ENCODE measurements at regions of chr19 and their contacts with region 1.

Region 1: DNA sequence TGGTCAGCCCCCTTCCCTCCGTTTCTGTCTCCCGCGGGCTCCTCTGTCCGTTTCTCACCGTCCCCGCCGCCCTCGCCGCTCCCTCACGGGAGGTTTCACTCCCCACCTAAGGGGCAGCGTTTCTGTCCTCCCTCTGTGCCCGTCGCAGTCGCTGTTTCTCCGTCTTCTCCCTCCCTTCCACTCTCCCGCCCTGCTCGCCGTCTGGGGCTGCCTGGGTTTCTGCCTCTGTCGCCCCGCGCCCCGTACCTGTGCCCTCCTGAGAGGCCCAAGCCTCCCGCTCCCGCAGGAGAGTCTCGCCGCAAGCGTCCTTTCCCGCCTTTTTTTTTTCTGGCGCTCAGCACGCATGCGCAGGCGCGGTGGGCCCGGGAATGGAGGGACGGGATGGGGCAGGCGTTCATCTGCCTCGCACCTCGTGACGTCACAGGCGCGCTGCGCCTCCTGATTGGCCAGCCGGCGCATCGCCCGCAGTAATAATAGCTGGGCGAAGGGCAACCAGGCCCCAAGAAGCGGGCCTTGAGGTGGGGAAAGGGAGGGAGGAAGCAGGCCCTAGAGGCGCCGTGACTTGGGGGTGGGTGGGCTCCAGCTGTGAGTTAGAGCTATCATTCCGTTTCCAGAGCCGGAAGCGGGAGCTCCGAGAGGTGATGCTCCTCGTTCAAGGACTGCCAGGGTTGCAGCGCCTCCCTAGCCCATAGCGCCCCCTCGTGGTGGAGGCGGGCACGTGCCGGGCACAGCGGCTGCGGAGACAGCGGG is 15.4 kb downstream of the SSC5D start:
- DNase-seq: peak; percentile 62 to 96
- H3K4me3 ChIP-seq: peak overlapping the region; percentile 27; the same call in 1 of the 2 replicates
- H3K27ac ChIP-seq: no peak overlapping the region
- H3K4me1 ChIP-seq: no peaks in the 10 kb centered on the region
- H3K27me3 ChIP-seq: peaks cover 27% of the 10 kb centered on the region
- CTCF ChIP-seq: peak; percentile 99

Region 2: DNA sequence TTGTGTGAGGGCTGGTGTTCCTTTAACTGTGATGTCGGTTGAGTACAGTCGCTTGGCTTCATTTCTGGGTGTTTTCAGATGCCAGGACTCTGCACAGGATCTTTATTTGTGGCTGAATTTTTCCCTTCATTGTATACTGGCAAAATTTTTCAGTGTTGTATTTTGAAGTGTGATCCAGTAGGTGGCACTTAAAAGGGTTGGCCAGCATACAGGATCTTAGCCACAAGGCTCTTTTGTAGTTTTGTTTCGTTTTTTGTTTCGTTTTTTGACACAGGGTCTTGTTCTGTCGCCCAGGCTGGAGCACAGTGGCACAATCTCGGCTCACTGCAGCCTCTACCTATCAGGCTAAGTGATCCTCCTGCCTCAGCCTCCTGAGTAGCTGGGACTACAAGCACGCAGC is 620.9 kb before region 1 on chr19:
- CTCF ChIA-PET with region 1: no interaction called
- POLR2A ChIA-PET with region 1: no interaction called
- intact Hi-C with region 1: loop called (anchors 10 kb)
- DNase-seq: no peak
- H3K4me3 ChIP-seq: no peak overlapping the region
- H3K27ac ChIP-seq: no peak overlapping the region
- H3K4me1 ChIP-seq: no peaks in the 10 kb centered on the region
- H3K27me3 ChIP-seq: peaks cover 31% of the 10 kb centered on the region
- CTCF ChIP-seq: no peak

Region 3: DNA sequence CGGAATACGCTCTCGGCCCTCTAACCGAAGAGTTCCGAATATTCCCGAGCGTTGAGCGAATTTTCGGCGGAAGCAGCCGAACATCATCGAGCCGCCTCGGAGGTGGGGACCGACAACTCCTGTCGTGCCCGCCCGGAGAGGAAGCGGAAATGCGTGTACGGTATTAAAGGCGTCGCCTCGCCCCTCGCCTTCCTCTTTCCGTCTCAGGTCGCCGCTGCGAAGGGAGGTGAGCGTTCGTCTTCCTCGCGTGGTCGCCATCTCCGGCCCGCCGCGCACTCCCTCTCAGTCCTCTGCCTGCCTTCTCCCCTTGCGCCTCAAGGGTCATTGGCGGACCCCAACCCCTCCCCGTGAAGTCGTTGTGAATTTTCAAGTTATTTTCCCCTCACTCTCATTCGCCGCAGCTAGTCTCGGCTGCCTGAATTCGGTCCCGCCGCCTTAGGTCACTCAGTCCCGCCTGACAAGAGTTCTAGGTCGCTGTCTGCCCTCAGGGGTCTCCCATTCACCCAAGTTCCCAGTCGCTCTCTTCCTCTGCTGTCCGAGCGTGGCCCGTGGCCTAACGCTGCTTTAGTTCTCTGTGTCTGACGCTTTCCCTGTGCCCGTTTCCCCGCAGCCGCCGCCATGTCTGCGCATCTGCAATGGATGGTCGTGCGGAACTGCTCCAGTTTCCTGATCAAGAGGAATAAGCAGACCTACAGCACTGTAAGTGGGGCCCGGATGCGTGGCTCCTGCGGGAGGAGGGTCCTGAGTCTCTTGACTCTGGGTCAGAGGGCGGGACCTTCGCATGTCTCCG is 117.7 kb before region 1 on chr19 and contains the start of gene RPL28:
- CTCF ChIA-PET with region 1: interaction called, 13 read pairs
- POLR2A ChIA-PET with region 1: no interaction called
- intact Hi-C with region 1: no loop called
- DNase-seq: peak; percentile 98 to 100
- H3K4me3 ChIP-seq: peak within 1 kb of the TSS; percentile 88
- H3K27ac ChIP-seq: peak within 1 kb of the TSS; percentile 83
- H3K4me1 ChIP-seq: peaks cover 39% of the 10 kb centered on the region
- H3K27me3 ChIP-seq: no peaks in the 10 kb centered on the region
- CTCF ChIP-seq: no peak
- total RNA-seq, gene RPL28: 2,433 and 2,547 TPM in 2 replicates

Region 4: DNA sequence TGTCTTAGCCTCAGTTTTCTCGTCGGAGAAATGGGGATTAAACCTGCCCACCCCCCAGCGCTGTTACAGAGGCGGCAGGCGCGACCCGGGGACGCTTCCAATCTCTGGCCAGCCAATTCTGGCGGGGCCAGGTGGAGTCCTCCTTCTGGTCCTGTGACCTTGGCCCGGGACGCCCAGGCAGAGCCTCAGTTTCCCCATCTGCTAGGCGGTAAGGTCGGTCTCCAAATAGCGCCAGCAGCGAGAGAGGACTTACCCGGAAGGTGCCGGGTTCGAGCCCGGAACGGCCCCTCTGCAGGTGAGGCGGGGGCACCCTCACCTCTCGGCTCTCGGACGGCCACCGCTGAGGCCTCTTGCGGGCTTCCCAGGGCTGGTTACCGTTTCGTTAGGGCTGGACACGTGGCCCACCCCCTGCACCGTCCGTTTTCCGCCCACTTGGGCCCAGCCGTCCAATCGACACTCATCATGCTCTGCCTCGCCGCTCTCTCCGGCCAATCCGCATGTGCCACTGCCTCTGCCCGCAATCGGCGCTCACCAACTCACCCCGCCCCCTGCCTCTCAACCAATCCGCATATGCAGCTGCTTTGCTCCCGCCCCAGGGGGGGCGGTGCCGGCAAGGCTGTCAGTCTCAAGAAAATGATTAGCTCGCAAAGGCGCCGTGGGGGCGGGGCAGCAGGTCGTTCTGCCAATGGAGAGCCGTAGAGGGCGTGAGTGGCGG is 42.3 kb before region 1 on chr19 and contains the start of gene ISOC2:
- CTCF ChIA-PET with region 1: interaction called, 11 read pairs
- POLR2A ChIA-PET with region 1: interaction called, 5 read pairs
- intact Hi-C with region 1: loop called (anchors 5 kb)
- DNase-seq: peak; percentile 99 to 100
- H3K4me3 ChIP-seq: peak within 1 kb of the TSS; percentile 90
- H3K27ac ChIP-seq: peak within 1 kb of the TSS; percentile 68
- H3K4me1 ChIP-seq: peaks cover 12% of the 10 kb centered on the region
- H3K27me3 ChIP-seq: no peaks in the 10 kb centered on the region
- CTCF ChIP-seq: no peak
- total RNA-seq, gene ISOC2: 92.4 and 113 TPM in 2 replicates

Region 5: DNA sequence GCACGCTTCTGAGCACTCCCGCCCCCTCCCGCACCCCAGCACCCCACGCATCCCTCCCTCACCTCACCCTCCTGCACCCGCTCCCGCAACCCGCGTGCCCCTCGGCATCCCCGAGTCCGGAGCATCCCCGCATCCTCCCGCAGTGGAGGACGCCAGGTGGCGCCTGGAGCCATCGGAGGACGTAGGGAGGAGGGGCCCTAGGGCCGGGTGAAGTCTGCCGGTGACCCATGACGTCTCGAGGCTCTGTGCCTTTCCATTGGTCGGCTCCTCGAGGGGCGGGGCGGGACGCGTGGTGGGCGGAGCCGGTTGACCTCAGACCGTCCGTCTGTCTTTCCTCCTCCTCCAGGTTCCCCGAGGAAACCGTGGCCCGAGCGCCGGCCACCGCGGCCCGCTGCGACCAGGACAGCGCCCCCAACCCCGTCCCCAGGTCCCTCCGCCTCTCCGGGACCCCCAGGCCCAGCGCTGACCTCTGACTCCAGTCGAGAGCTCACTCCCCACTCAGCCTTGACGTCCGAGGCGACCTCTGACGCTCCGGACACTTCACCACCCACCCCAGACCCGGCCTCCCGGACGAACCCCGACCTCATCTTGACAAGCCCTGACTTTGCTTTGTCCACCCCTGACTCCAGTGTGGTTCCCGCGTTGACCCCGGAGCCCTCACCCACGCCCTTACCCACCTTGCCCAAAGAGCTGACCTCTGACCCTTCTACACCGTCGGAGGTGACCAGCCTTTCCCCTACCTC is 13.4 kb after region 1 on chr19:
- CTCF ChIA-PET with region 1: interaction called, 15 read pairs
- POLR2A ChIA-PET with region 1: interaction called, 19 read pairs
- intact Hi-C with region 1: no loop called
- DNase-seq: peak; percentile 83 to 97
- H3K4me3 ChIP-seq: peak overlapping the region; percentile 60; the same call in 1 of the 2 replicates
- H3K27ac ChIP-seq: no peak overlapping the region
- H3K4me1 ChIP-seq: no peaks in the 10 kb centered on the region
- H3K27me3 ChIP-seq: peaks cover 17% of the 10 kb centered on the region
- CTCF ChIP-seq: peak; percentile 94

Measured in PC-9 (cell line).